GM12878 (cell line): ENCODE measurements at regions of chr11 and their contacts with region 1.

Region 1: GRCh38 chr11:118295834-118296454 is 8.6 kb upstream of the CD3E start:
- DNase-seq: no peak
- ATAC-seq: peak; percentile 88
- H3K4me3 ChIP-seq: no peak overlapping the region
- H3K27ac ChIP-seq: no peak overlapping the region
- H3K4me1 ChIP-seq: no peaks in the 10 kb centered on the region
- H3K27me3 ChIP-seq: no peaks in the 10 kb centered on the region; a peak in 1 of 4 replicates
- CTCF ChIP-seq: peak; percentile 60 to 64 (median 60); a peak in 5 of 6 replicates
- EP300 ChIP-seq: no peak
- POLR2A ChIP-seq: no peak
- RAD21 ChIP-seq: peak; percentile 66

Region 2: DNA sequence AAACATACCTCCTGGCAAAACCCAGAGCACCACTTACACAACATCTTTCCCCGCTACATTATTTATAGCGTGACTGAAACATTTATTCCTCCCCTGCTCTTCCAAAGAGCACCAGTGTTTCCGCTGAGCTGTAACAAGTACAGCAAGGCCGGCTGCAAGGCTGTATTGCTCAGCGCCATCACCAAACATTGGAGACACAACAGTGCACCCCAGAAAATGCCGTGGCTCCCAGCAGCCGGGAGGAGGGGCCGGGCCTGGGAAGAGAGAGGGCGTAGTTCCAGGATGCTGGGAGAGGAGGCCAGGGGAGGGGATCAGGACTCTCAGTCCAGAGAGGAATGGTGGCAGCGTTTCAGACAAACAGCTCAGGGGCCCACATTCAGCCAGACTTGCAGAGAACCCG is 632.1 kb before region 1 on chr11:
- CTCF ChIA-PET with region 1: no interaction called
- POLR2A ChIA-PET with region 1: no interaction called
- RAD21 ChIA-PET with region 1: no interaction called
- SMC1A ChIA-PET with region 1: no interaction called
- in situ Hi-C with region 1: no loop called
- intact Hi-C with region 1: no loop called
- DNase-seq: no peak
- ATAC-seq: no peak
- H3K4me3 ChIP-seq: no peak overlapping the region
- H3K27ac ChIP-seq: no peak overlapping the region
- H3K4me1 ChIP-seq: no peaks in the 10 kb centered on the region
- H3K27me3 ChIP-seq: peaks cover 1 to 4% of the 10 kb centered on the region in 2 experiments; a peak in 3 of 4 replicates
- CTCF ChIP-seq: no peak
- EP300 ChIP-seq: no peak
- POLR2A ChIP-seq: no peak
- RAD21 ChIP-seq: no peak

Region 3: GRCh38 chr11:118015385-118015841 is 280.5 kb before region 1 on chr11:
- CTCF ChIA-PET with region 1: no interaction called
- POLR2A ChIA-PET with region 1: no interaction called
- RAD21 ChIA-PET with region 1: no interaction called
- SMC1A ChIA-PET with region 1: no interaction called
- in situ Hi-C with region 1: no loop called
- intact Hi-C with region 1: no loop called
- DNase-seq: no peak
- ATAC-seq: no peak
- H3K4me3 ChIP-seq: no peak overlapping the region
- H3K27ac ChIP-seq: no peak overlapping the region
- H3K4me1 ChIP-seq: peaks cover 41% of the 10 kb centered on the region
- H3K27me3 ChIP-seq: no peaks in the 10 kb centered on the region
- CTCF ChIP-seq: no peak
- EP300 ChIP-seq: no peak
- POLR2A ChIP-seq: no peak
- RAD21 ChIP-seq: no peak

Region 4: GRCh38 chr11:118277306-118277705 is 18.6 kb before region 1 on chr11:
- CTCF ChIA-PET with region 1: interaction called, 41 read pairs
- POLR2A ChIA-PET with region 1: no interaction called
- RAD21 ChIA-PET with region 1: no interaction called
- SMC1A ChIA-PET with region 1: interaction called, 6 read pairs
- in situ Hi-C with region 1: no loop called
- intact Hi-C with region 1: no loop called
- DNase-seq: no peak
- ATAC-seq: peak; percentile 87
- H3K4me3 ChIP-seq: no peak overlapping the region
- H3K27ac ChIP-seq: no peak overlapping the region
- H3K4me1 ChIP-seq: peaks cover 13% of the 10 kb centered on the region; the same call in 1 of the 2 replicates
- H3K27me3 ChIP-seq: no peaks in the 10 kb centered on the region
- CTCF ChIP-seq: no peak
- EP300 ChIP-seq: no peak
- POLR2A ChIP-seq: no peak
- RAD21 ChIP-seq: no peak

Region 5: DNA sequence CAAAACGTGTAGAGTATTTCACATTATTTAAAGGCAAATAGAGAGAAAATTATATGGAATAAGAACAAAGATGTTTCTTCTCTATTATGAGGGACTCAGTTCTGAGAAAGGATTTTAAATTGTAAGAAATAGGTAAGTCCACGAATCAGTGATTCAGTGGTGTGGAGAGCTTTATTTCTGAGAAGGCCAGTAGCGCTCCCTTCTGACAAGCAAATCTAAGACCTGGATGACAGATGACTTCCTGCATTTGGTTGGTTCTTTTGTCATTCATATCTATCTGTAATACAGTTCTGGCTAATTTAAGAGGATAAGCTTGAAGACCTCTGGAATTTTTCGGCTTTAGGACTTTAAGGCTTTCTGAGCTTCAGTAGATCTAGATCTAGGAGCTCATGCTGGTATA is 15.6 kb after region 1 on chr11:
- CTCF ChIA-PET with region 1: interaction called, 16 read pairs
- POLR2A ChIA-PET with region 1: interaction called, 3 read pairs
- RAD21 ChIA-PET with region 1: interaction called, 3 read pairs
- SMC1A ChIA-PET with region 1: interaction called, 7 read pairs
- in situ Hi-C with region 1: no loop called
- intact Hi-C with region 1: no loop called
- DNase-seq: no peak
- ATAC-seq: no peak
- H3K4me3 ChIP-seq: no peak overlapping the region
- H3K27ac ChIP-seq: no peak overlapping the region
- H3K4me1 ChIP-seq: peaks cover 7% of the 10 kb centered on the region; the same call in 1 of the 2 replicates
- H3K27me3 ChIP-seq: no peaks in the 10 kb centered on the region
- CTCF ChIP-seq: no peak
- EP300 ChIP-seq: no peak
- POLR2A ChIP-seq: no peak
- RAD21 ChIP-seq: no peak

Region 6: DNA sequence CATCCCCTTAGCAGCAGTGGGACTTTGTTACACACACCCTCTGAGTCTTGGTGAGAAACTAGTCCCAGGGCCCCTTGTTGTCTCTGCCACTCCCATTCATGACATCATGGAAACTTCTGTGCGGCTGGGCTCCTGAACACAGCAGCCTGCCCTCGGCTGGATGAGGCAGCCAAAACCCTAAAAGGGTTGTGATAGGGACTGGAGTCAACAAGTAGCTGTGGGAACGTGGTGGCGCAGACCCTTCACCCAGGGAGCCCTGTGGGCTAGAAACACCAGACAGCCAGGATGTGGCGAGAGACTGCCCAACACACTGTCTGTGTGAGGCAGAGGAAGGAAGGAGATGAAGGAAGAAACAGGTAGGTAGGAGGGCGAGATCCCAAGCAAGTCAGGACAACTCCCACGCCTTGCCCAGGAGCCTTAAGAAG is 42.7 kb after region 1 on chr11:
- CTCF ChIA-PET with region 1: interaction called, 10 read pairs
- POLR2A ChIA-PET with region 1: interaction called, 3 read pairs
- RAD21 ChIA-PET with region 1: interaction called, 3 read pairs
- SMC1A ChIA-PET with region 1: interaction called, 4 read pairs
- in situ Hi-C with region 1: no loop called
- intact Hi-C with region 1: no loop called
- DNase-seq: no peak
- ATAC-seq: peak; percentile 91
- H3K4me3 ChIP-seq: no peak overlapping the region
- H3K27ac ChIP-seq: no peak overlapping the region
- H3K4me1 ChIP-seq: no peaks in the 10 kb centered on the region
- H3K27me3 ChIP-seq: no peaks in the 10 kb centered on the region
- CTCF ChIP-seq: no peak
- EP300 ChIP-seq: 0 out of 4 replicates have a peak, but pooled peaks of 1 of the 2 experiments have one; percentile 21
- POLR2A ChIP-seq: no peak
- RAD21 ChIP-seq: no peak

Region 7: GRCh38 chr11:118353084-118353710 is 57.3 kb after region 1 on chr11:
- CTCF ChIA-PET with region 1: interaction called, 72 read pairs
- POLR2A ChIA-PET with region 1: interaction called, 3 read pairs
- RAD21 ChIA-PET with region 1: interaction called, 16 read pairs
- SMC1A ChIA-PET with region 1: interaction called, 31 read pairs
- in situ Hi-C with region 1: no loop called
- intact Hi-C with region 1: loop called (anchors 2 kb)
- DNase-seq: no peak
- ATAC-seq: no peak
- H3K4me3 ChIP-seq: no peak overlapping the region
- H3K27ac ChIP-seq: no peak overlapping the region
- H3K4me1 ChIP-seq: no peaks in the 10 kb centered on the region
- H3K27me3 ChIP-seq: peaks cover 0 to 4% of the 10 kb centered on the region in 2 experiments; a peak in 1 of 4 replicates
- CTCF ChIP-seq: peak; percentile 34 to 49 (median 47); a peak in 5 of 6 replicates
- EP300 ChIP-seq: no peak
- POLR2A ChIP-seq: no peak
- RAD21 ChIP-seq: peak; percentile 55

Region 8: GRCh38 chr11:118634431-118635236 is 338.7 kb after region 1 on chr11:
- CTCF ChIA-PET with region 1: no interaction called
- POLR2A ChIA-PET with region 1: no interaction called
- RAD21 ChIA-PET with region 1: no interaction called
- SMC1A ChIA-PET with region 1: no interaction called
- in situ Hi-C with region 1: no loop called
- intact Hi-C with region 1: no loop called
- DNase-seq: no peak
- ATAC-seq: peak; percentile 59
- H3K4me3 ChIP-seq: no peak overlapping the region
- H3K27ac ChIP-seq: no peak overlapping the region
- H3K4me1 ChIP-seq: no peaks in the 10 kb centered on the region
- H3K27me3 ChIP-seq: peaks cover 4 to 11% of the 10 kb centered on the region in 2 experiments
- CTCF ChIP-seq: no peak
- EP300 ChIP-seq: no peak
- POLR2A ChIP-seq: no peak
- RAD21 ChIP-seq: no peak